Esophagus squamous epithelium (tissue), 5 donors: ENCODE measurements at regions of chr5 and their contacts with region 1.

Region 1: GRCh38 chr5:175444060-175444904 is at the start of gene DRD1:
- DNase-seq: no peak
- H3K4me3 ChIP-seq: peak within 1 kb of the TSS; percentile 13 to 65 (median 37)
- H3K27ac ChIP-seq: peak within 1 kb of the TSS in 1 of 4 donors; percentile 50
- H3K4me1 ChIP-seq: peaks cover 8 to 22% (median 12%) of the 10 kb centered on the region in 3 donors
- H3K27me3 ChIP-seq: peaks cover 4 to 78% (median 8%) of the 10 kb centered on the region in 4 donors
- CTCF ChIP-seq: peak; percentile 61 to 83 (median 70)
- POLR2A ChIP-seq: no peak
- total RNA-seq, gene DRD1: 0.06 to 0.19 TPM in 2 of 4 donors, not detected in the others

Region 2: GRCh38 chr5:174951146-174951780 is 493.0 kb before region 1 on chr5:
- intact Hi-C with region 1: loop called (anchors 5 kb)
- DNase-seq: no peak
- H3K4me3 ChIP-seq: no peak overlapping the region
- H3K27ac ChIP-seq: no peak overlapping the region
- H3K4me1 ChIP-seq: no peaks in the 10 kb centered on the region
- H3K27me3 ChIP-seq: peaks cover 0 to 17% (median 0%) of the 10 kb centered on the region in 4 donors
- CTCF ChIP-seq: peak; percentile 64 to 84 (median 80)
- POLR2A ChIP-seq: no peak